GM13976 (cell line): ENCODE measurements at regions of chr1 and their contacts with region 1.

Region 1: GRCh38 chr1:65687428-65688214 is 105.1 kb upstream of the PDE4B start:
- DNase-seq: peak; percentile 58
- CTCF ChIP-seq: peak; percentile 88

Region 2: DNA sequence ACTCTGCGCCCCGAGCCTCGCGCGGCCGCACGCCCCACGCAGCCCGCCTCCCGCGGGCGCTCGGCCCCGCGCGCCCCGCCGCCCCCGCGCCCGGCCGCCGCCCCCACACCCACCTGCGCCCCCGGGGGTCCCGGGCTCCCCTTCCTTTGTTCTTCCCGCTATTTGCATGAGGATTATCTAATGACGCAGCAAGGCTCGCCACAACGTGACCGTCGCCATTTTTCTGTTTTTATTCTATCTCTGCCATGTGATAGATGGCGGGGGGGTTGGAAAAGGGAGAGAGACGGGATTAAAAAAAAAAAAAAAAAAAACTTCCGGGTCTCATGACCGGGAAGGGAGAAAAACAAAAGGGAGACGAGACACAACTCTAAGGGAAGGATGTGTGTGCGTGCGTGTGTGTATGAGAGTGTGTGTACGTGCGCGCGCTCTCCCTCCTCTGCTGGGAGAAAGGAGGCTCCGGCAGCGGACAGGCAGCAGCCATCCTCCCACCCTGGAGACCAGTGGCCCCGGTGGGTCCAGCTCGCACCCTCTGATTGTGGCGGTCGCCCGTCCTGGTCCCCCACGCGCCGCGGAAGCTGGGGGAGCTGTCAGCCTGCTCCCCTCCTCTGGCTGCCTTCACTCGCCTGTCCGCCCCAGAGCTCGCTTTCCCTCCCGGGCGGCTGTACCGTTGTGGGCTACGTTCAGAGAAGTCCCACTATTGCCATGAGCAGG is 620.0 kb before region 1 on chr1:
- in situ Hi-C with region 1: loop called (anchors 25 kb)
- DNase-seq: peak; percentile 61
- CTCF ChIP-seq: no peak

Region 3: GRCh38 chr1:65235867-65236805 is 451.5 kb before region 1 on chr1:
- in situ Hi-C with region 1: loop called (anchors 10 kb)
- DNase-seq: no peak
- CTCF ChIP-seq: peak; percentile 16

Region 4: DNA sequence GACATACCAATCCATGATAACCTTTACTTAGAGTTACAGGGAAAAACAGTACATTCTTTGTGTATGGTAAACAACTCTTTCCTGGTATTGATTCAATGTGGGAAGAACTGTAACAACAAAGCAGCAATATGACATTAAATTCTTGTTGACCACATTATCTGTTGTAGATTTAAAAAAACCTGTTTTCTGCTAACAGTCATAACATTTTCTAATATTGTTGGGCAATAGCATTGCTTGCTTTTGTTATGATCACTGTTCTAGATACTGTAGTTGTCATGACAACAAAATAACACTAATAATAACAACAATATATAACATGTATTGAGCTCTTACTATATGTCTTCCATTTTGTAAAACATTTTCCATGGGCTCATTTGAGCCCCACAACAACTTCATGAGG is 159.2 kb after region 1 on chr1:
- in situ Hi-C with region 1: no loop called
- DNase-seq: no peak
- CTCF ChIP-seq: no peak